ENCODE measurements at regions of chr1 and their contacts with region 1.

Region 1: GRCh38 chr1:225257081-225257480 is 170.8 kb downstream of the LBR start:
- DNase-seq: no peak
- H3K4me3 ChIP-seq: no peak overlapping the region
- H3K27ac ChIP-seq: no peak overlapping the region
- H3K4me1 ChIP-seq: peaks cover 0 to 3% (median 1%) of the 10 kb centered on the region in 4 experiments
- H3K27me3 ChIP-seq: no peaks in the 10 kb centered on the region

Region 2: DNA sequence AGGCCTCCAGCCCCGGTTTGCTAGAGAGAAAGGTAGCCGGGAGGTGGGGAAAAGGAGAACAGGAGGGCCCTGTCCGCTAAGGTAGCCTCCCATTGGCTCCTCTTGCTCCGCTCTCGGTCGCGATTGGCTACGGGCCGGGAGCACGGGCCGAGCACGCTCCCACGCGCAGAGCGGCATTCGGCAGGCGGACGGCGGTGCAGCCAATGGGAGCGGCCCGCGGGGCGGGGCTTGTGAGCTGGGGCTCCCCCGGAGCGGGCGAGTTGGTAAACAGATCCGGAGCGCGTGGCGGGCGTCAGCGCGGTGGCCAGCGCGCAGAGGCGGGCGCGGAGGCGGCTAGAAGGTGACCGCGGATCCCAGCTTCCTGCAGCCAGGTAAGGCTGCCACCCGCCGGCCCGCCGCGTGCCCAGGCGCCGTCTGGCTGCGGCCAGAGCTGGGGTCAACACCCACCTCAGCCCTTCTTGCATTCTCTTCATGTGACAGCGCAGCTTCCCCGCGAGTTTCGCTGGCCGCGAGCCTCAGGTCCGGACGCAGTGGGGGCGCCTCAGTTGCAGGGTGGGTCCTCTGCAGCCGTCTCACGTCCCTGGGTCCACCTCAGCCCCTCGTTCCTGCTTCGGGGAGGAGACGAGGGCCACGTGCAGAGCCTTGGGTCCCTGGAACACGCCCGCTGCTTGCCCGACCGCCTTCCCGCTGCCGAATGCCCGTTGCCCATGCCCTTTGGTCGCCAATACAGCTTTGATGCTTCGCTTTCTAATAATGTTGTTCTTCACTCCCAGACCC is 1683.1 kb after region 1 on chr1 and contains the start of gene COQ8A:
- CTCF ChIA-PET with region 1: no interaction called
- POLR2A ChIA-PET with region 1: interaction called, 11 read pairs
- DNase-seq: peak; percentile 99 to 100 (median 99)
- H3K4me3 ChIP-seq: peak within 1 kb of the TSS; percentile 68 to 86 (median 79)
- H3K27ac ChIP-seq: peak within 1 kb of the TSS; percentile 91 to 96
- H3K4me1 ChIP-seq: peaks cover 14 to 79% (median 50%) of the 10 kb centered on the region in 4 experiments
- H3K27me3 ChIP-seq: no peaks in the 10 kb centered on the region